Activated B cell treated with CpG ODN at 0.5 μM for 24 hours (primary cell): ENCODE measurements at regions of chr7 and their contacts with region 1.

Region 1: GRCh38 chr7:139043823-139044812 is 8.3 kb upstream of the ZC3HAV1L start:
- DNase-seq: no peak
- ATAC-seq: peak; percentile 49
- H3K4me3 Mint-ChIP-seq: peak overlapping the region; percentile 36
- H3K27ac Mint-ChIP-seq: peak overlapping the region; percentile 80
- H3K4me1 Mint-ChIP-seq: peaks cover 40% of the 10 kb centered on the region
- H3K27me3 Mint-ChIP-seq: no peaks in the 10 kb centered on the region
- CTCF ChIP-seq: no peak

Region 2: GRCh38 chr7:139060695-139061237 is 16.6 kb after region 1 on chr7:
- CTCF ChIA-PET with region 1: no interaction called
- POLR2A ChIA-PET with region 1: interaction called, 3 read pairs
- intact Hi-C with region 1: loop called (anchors 2 kb)
- DNase-seq: no peak
- ATAC-seq: no peak
- H3K4me3 Mint-ChIP-seq: no peak overlapping the region
- H3K27ac Mint-ChIP-seq: peak overlapping the region; percentile 54
- H3K4me1 Mint-ChIP-seq: peaks cover 5% of the 10 kb centered on the region
- H3K27me3 Mint-ChIP-seq: no peaks in the 10 kb centered on the region
- CTCF ChIP-seq: no peak